HEK293T (cell line): ENCODE measurements at regions of chr3 and their contacts with region 1.

Region 1: DNA sequence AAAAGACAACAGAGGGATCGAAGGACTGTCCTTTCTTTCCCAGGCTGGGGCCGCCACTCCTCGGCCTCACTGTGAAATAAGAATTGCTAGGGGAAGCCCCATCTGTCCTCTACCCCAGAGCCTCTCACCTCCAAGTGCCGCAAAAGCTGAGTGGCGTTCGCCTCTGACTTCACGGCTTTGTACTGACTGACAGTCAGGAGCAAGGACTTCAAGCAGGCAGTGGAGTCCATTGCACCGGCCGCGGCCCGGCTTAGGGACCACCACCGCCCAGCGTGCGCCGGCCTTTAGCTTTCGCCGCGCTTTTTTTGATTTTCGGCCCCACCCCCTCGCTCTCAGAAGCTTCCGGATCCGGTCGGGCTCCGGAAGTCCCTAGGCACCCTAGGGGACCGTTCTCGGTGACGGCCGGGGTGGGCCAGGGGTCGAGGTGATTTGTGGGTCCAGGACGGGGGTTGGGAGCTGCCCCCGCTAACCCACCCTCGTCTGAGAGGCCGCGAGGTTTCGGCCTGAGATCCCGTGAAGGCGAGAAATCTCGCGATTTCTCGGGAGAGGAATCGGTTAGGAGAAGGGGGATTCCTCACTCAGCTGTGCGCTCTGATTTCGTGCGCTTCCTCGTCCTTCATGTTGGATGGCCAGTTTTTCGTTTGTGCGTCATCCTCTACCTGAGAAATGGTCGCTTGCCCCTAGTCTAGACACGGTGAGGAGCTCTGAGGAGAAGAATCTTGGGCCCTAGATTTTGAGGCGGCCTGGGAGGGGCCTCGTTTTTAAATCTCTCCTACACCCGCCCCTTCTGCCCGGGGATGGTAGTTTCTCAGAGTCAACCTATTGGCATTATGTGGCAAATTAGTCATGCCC is at the starts of genes CIP2A and DZIP3:
- DNase-seq: peak; percentile 93

Region 2: GRCh38 chr3:108208831-108209230 is 380.5 kb before region 1 on chr3:
- CTCF ChIA-PET with region 1: no interaction called
- POLR2A ChIA-PET with region 1: no interaction called
- DNase-seq: no peak

Region 3: GRCh38 chr3:108477511-108478147 is 111.7 kb before region 1 on chr3:
- CTCF ChIA-PET with region 1: no interaction called
- POLR2A ChIA-PET with region 1: no interaction called
- DNase-seq: peak; percentile 67

Region 4: DNA sequence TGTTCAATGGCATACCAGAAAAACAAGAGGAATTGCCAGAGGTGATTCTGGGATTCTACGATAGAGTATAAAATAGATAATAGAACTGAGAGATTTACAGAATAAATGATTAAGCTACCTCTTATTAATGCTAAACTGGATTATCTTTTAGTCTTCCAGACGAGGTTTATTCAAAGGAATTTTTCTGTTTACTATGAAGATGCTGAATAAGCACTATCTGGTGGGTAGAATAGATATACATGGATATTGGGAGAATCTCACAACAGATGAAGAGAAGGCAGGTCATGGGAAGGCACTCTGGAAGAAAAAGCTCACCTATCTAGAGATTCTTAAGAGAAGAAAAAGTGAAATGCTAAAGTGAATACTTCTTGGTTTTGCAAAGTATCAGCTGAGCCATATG is 11.3 kb before region 1 on chr3:
- CTCF ChIA-PET with region 1: no interaction called
- POLR2A ChIA-PET with region 1: interaction called, 10 read pairs
- DNase-seq: no peak

Region 5: DNA sequence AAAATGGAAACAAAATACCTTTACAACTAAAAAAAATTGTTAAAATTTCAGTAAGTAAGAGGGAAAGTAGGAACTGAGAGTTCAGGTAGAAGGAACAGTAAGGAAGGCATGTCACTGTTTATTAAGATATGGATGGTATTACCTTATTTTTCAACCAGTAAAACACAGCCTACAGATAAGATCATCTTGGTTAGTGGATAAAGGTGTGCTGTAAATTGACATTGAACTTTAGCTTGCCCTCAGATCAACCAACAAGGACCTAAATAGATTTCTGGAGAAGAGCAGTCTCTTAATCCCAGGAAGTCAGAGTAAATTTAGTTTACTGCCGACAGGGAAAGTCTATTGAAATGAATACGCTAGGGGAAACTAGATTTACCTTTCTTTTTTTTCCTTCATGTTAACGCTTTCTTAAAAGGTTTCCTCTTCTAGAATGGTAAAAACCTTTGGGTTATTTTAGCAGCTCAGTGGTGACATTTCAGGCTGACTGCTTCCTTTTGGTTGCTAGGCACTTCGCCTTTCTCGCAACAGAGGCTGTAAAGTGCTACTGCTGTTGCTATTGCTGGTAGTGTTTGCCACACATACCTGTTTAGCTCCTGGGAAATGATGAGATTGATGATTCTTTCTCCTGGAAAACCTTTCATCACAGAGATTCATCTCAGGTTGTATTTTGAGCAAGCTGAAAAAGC is 13.0 kb after region 1 on chr3:
- CTCF ChIA-PET with region 1: no interaction called
- POLR2A ChIA-PET with region 1: interaction called, 29 read pairs
- DNase-seq: no peak

Region 6: GRCh38 chr3:108705045-108705444 is 115.7 kb after region 1 on chr3:
- CTCF ChIA-PET with region 1: no interaction called
- POLR2A ChIA-PET with region 1: no interaction called
- DNase-seq: no peak